ENCODE measurements at regions of chr4 and their contacts with region 1.

Region 1: DNA sequence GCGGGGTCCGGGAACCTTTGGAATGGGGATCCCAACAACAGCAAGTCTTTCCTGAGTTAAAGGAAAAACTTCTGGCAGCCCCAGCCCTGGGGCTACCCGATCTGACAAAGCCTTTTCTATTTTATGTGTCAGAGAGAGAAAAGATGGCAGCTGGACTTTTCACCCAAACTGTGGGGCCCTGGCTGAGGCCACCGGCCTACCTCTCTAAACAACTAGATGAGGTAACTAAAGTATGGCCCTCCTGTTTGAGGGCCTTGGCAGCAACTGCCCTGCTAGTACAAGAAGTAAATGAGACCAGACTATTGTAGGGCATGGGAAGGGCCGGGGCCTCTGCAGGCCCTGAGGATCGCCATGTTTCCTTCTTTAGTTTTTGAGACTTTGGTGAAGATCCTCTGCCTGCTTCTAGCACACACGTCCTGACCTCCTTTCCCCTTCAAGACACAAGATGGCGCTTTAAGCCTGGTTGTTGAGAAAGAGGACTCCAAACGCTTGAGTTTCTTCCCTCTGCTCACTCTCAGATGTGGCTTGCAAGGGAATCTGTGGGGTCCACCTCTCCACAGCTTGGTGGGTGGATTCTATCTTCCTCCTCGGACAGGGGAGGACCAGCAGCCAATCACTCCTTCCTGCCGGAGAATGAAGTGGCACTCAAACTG is 18.5 kb upstream of the DRD5 start:
- DNase-seq: peak in 8 of 9 donors; percentile 5 to 56 (median 34)
- ATAC-seq: no peak
- H3K4me3 ChIP-seq: no peak overlapping the region
- H3K4me3 Mint-ChIP-seq: no peak overlapping the region
- H3K27ac ChIP-seq: no peak overlapping the region
- H3K27ac Mint-ChIP-seq: no peak overlapping the region
- H3K4me1 ChIP-seq: no peaks in the 10 kb centered on the region
- H3K4me1 Mint-ChIP-seq: no peaks in the 10 kb centered on the region
- H3K27me3 ChIP-seq: no peaks in the 10 kb centered on the region
- H3K27me3 Mint-ChIP-seq: peaks cover 11 to 35% (median 26%) of the 10 kb centered on the region in 5 donors

Region 2: GRCh38 chr4:9745771-9746170 is 17.2 kb before region 1 on chr4:
- CTCF ChIA-PET with region 1: no interaction called
- POLR2A ChIA-PET with region 1: no interaction called
- intact Hi-C with region 1: no loop called
- DNase-seq: no peak
- ATAC-seq: peak; percentile 18
- H3K4me3 ChIP-seq: no peak overlapping the region
- H3K4me3 Mint-ChIP-seq: no peak overlapping the region
- H3K27ac ChIP-seq: no peak overlapping the region
- H3K27ac Mint-ChIP-seq: peak overlapping the region in 1 of 9 donors; percentile 12
- H3K4me1 ChIP-seq: no peaks in the 10 kb centered on the region
- H3K4me1 Mint-ChIP-seq: peaks cover 0 to 5% (median 0%) of the 10 kb centered on the region in 7 donors
- H3K27me3 ChIP-seq: no peaks in the 10 kb centered on the region
- H3K27me3 Mint-ChIP-seq: peaks cover 5 to 18% (median 11%) of the 10 kb centered on the region in 5 donors

Region 3: GRCh38 chr4:9849538-9849920 is 86.6 kb after region 1 on chr4:
- CTCF ChIA-PET with region 1: no interaction called
- POLR2A ChIA-PET with region 1: no interaction called
- intact Hi-C with region 1: no loop called
- DNase-seq: no peak
- ATAC-seq: no peak
- H3K4me3 ChIP-seq: no peak overlapping the region
- H3K4me3 Mint-ChIP-seq: no peak overlapping the region
- H3K27ac ChIP-seq: no peak overlapping the region
- H3K27ac Mint-ChIP-seq: no peak overlapping the region
- H3K4me1 ChIP-seq: no peaks in the 10 kb centered on the region
- H3K4me1 Mint-ChIP-seq: no peaks in the 10 kb centered on the region
- H3K27me3 ChIP-seq: no peaks in the 10 kb centered on the region
- H3K27me3 Mint-ChIP-seq: peaks cover 5 to 29% (median 14%) of the 10 kb centered on the region in 5 donors

Region 4: GRCh38 chr4:9898596-9899305 is 135.8 kb after region 1 on chr4:
- CTCF ChIA-PET with region 1: no interaction called
- POLR2A ChIA-PET with region 1: no interaction called
- intact Hi-C with region 1: loop called in 1 of 2 experiments (anchors 5 kb)
- DNase-seq: no peak
- ATAC-seq: no peak
- H3K4me3 ChIP-seq: no peak overlapping the region
- H3K4me3 Mint-ChIP-seq: no peak overlapping the region
- H3K27ac ChIP-seq: no peak overlapping the region
- H3K27ac Mint-ChIP-seq: no peak overlapping the region
- H3K4me1 ChIP-seq: no peaks in the 10 kb centered on the region
- H3K4me1 Mint-ChIP-seq: no peaks in the 10 kb centered on the region
- H3K27me3 ChIP-seq: no peaks in the 10 kb centered on the region
- H3K27me3 Mint-ChIP-seq: peaks cover 0 to 22% (median 6%) of the 10 kb centered on the region in 5 donors

Region 5: GRCh38 chr4:10157478-10158332 is 394.8 kb after region 1 on chr4:
- CTCF ChIA-PET with region 1: no interaction called
- POLR2A ChIA-PET with region 1: no interaction called
- intact Hi-C with region 1: loop called in 1 of 2 experiments (anchors 2 kb)
- DNase-seq: peak in 7 of 9 donors; percentile 4 to 37 (median 32)
- ATAC-seq: peak; percentile 63
- H3K4me3 ChIP-seq: no peak overlapping the region
- H3K4me3 Mint-ChIP-seq: peak overlapping the region in 5 of 10 donors; percentile 19 to 48 (median 25)
- H3K27ac ChIP-seq: no peak overlapping the region
- H3K27ac Mint-ChIP-seq: peak overlapping the region in 7 of 9 donors; percentile 12 to 86 (median 60)
- H3K4me1 ChIP-seq: peaks cover 8 to 39% of the 10 kb centered on the region in 2 donors
- H3K4me1 Mint-ChIP-seq: peaks cover 14 to 57% (median 50%) of the 10 kb centered on the region in 7 donors
- H3K27me3 ChIP-seq: no peaks in the 10 kb centered on the region
- H3K27me3 Mint-ChIP-seq: no peaks in the 10 kb centered on the region